Breast epithelium (tissue), 4 donors: ENCODE measurements at regions of chr3 and their contacts with region 1.

Region 1: GRCh38 chr3:39189959-39190269 is 2.5 kb downstream of the XIRP1 start:
- DNase-seq: peak; percentile 65 to 77
- H3K4me3 ChIP-seq: no peak overlapping the region
- H3K27ac ChIP-seq: peak overlapping the region in 1 of 2 donors; percentile 42
- H3K4me1 ChIP-seq: peaks cover 0 to 5% of the 10 kb centered on the region in 2 donors
- H3K27me3 ChIP-seq: no peaks in the 10 kb centered on the region
- CTCF ChIP-seq: peak in 2 of 3 donors; percentile 61 to 79
- POLR2A ChIP-seq: no peak

Region 2: GRCh38 chr3:39207361-39208186 is 17.7 kb after region 1 on chr3:
- intact Hi-C with region 1: loop called (anchors 1 kb)
- DNase-seq: no peak
- H3K4me3 ChIP-seq: no peak overlapping the region
- H3K27ac ChIP-seq: no peak overlapping the region
- H3K4me1 ChIP-seq: no peaks in the 10 kb centered on the region
- H3K27me3 ChIP-seq: no peaks in the 10 kb centered on the region
- CTCF ChIP-seq: no peak
- POLR2A ChIP-seq: no peak

Region 3: DNA sequence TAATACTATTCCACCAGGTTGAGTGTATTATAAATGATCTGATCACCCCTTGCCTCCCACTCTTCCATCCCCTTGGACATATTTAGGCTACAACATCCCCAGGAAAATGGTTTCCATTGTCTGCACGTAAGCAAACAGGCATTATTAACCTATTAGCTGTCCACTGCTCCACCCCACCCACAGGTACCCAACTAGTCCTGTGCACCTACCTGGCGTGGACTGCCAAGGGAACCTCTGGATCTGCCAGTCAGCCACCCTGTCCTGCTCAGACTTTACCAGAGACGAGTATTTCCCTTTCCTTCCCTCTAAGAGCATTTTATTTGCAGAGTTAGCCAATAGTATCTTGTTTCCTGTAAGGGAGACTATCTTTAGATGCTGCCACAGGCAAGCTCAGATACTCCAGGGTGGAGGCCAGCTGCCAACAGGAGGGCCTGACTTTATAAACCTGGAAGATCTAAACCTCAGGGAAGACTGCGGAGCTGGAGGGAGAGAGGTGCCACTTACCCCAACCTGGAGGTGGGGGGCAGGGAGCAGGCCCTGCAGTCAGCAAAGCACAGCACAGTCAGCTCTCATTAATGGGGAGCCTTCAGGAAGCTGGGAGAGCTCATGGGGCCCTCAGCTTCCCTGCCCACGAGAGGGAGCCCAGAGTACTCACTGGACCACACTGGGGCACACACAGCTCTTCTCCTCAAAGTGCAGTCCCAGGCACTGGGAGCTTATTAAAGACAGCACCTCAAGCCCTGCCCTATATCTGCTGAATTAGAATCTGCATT is 90.0 kb after region 1 on chr3 and contains the start of gene CX3CR1:
- intact Hi-C with region 1: loop called (anchors 5 kb)
- DNase-seq: no peak
- H3K4me3 ChIP-seq: no peak within 1 kb of the TSS
- H3K27ac ChIP-seq: peak within 1 kb of the TSS in 1 of 2 donors; percentile 1
- H3K4me1 ChIP-seq: no peaks in the 10 kb centered on the region
- H3K27me3 ChIP-seq: no peaks in the 10 kb centered on the region
- CTCF ChIP-seq: no peak
- POLR2A ChIP-seq: no peak
- total RNA-seq, gene CX3CR1: 0.32 to 2.8 (median 1.3) TPM